IMR-90 (cell line): ENCODE measurements at regions of chr7 and their contacts with region 1.

Region 1: GRCh38 chr7:6035686-6036085 is 4.5 kb downstream of the ANKRD61 start:
- DNase-seq: no peak
- ATAC-seq: no peak
- H3K4me3 ChIP-seq: no peak overlapping the region
- H3K27ac ChIP-seq: no peak overlapping the region
- H3K4me1 ChIP-seq: no peaks in the 10 kb centered on the region
- H3K27me3 ChIP-seq: no peaks in the 10 kb centered on the region
- CTCF ChIP-seq: no peak
- POLR2A ChIP-seq: no peak
- RAD21 ChIP-seq: no peak

Region 2: GRCh38 chr7:6023974-6024435 is 11.7 kb before region 1 on chr7:
- CTCF ChIA-PET with region 1: interaction called, 5 read pairs
- POLR2A ChIA-PET with region 1: no interaction called
- dilution Hi-C with region 1: no loop called
- in situ Hi-C with region 1: no loop called
- intact Hi-C with region 1: loop called (anchors 2 kb)
- DNase-seq: no peak
- ATAC-seq: no peak
- H3K4me3 ChIP-seq: no peak overlapping the region
- H3K27ac ChIP-seq: no peak overlapping the region
- H3K4me1 ChIP-seq: no peaks in the 10 kb centered on the region
- H3K27me3 ChIP-seq: no peaks in the 10 kb centered on the region
- CTCF ChIP-seq: no peak
- POLR2A ChIP-seq: no peak
- RAD21 ChIP-seq: no peak